BJ (cell line): ENCODE measurements at regions of chr2 and their contacts with region 1.

Region 1: GRCh38 chr2:26605195-26605998 is 35.8 kb downstream of the CIB4 start:
- DNase-seq: no peak
- H3K4me3 ChIP-seq: no peak overlapping the region
- H3K27me3 ChIP-seq: peaks cover 6% of the 10 kb centered on the region
- CTCF ChIP-seq: peak; percentile 85

Region 2: DNA sequence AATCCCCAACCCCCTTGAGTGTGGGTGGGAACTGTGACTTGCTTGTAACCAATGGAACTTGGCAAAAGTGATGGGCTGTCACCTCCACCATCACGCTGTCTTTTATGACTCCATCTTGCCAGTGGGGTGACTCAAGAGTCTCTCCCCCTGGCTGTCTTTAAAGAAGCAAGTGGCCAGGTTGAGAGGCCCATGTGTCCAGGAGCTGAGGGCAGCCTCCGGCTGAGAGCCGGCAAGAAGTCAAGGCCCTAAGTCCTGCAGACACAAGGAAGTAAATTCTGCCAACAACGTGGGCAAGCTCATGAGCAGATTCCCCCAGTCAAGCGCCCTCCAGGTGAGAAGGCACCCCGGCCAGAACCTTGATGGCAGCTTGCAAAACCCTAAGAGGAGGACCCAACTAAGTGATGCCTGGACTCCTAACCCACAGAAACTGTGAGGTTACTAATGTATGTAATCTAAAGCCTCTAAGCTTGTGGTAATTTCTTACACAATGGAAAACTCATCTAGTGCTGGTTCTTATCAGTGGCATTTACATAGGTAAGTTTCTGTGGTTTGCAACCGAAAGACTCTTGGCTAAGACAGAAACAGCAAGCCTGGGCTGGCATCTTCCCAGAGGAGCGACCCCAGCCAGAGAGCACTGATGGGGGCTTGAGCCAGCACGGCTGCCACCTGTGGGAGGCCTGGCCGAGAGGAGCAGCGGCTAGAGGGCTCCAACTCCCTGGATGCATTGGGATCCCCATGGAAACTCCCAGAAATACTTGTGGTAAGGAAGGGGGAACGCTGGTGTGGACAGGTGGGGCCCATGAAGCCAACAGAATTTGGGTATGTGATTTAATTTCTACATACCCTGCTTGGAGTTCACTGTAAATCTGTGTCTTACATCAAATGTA is 13.5 kb before region 1 on chr2:
- CTCF ChIA-PET with region 1: interaction called, 30 read pairs
- POLR2A ChIA-PET with region 1: no interaction called
- DNase-seq: no peak
- H3K4me3 ChIP-seq: no peak overlapping the region
- H3K27me3 ChIP-seq: peaks cover 29% of the 10 kb centered on the region
- CTCF ChIP-seq: no peak

Region 3: DNA sequence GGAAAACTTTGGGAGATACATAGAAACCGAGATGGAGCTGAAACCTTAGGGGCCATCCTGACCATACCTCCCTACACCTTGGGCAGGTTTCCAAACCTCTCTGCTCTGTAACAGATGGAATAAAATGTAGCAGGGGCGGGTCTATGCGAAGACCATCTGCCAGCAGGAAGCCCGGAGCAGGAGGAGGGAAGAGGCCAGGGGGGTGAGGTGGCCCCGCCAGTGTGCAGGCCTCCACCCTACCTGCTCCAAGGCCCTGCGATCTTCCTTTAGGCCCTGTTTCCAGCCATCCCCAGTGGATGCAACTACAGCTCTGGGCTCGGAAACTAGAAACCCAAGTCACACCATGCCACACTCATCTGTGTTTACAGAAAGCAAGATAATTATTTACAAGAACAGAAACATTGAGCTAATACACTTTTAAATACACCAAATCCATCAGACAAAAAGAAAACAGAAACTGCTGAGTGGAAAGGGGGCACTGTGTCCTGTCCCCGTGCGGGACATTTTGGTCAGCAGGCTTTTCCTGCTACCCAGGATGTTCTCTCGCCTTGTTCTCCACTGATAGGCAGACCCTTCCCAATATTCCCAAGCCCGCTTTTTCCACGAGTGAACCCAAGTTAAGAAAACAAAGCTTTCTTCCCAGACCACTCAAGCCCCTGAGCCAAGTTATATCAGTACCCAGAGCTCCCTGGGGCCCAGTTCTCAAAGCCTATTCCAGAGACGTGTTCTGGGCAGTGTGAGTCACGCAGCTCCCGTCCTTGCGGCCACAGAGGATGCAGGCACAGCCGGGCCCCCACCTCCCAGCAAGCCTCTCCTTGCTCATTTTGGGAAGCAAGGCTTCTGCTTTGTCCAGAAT is 18.4 kb after region 1 on chr2:
- CTCF ChIA-PET with region 1: interaction called, 19 read pairs
- POLR2A ChIA-PET with region 1: no interaction called
- DNase-seq: no peak
- H3K4me3 ChIP-seq: no peak overlapping the region
- H3K27me3 ChIP-seq: peaks cover 11% of the 10 kb centered on the region; the same call in 1 of the 2 replicates
- CTCF ChIP-seq: no peak

Region 4: GRCh38 chr2:26652361-26653041 is 47.1 kb after region 1 on chr2:
- CTCF ChIA-PET with region 1: interaction called, 11 read pairs
- POLR2A ChIA-PET with region 1: no interaction called
- DNase-seq: peak; percentile 66
- H3K4me3 ChIP-seq: no peak overlapping the region
- H3K27me3 ChIP-seq: peaks cover 23% of the 10 kb centered on the region
- CTCF ChIP-seq: no peak

Region 5: GRCh38 chr2:26754993-26755541 is 149.7 kb after region 1 on chr2:
- CTCF ChIA-PET with region 1: interaction called, 19 read pairs
- POLR2A ChIA-PET with region 1: no interaction called
- DNase-seq: no peak
- H3K4me3 ChIP-seq: no peak overlapping the region
- H3K27me3 ChIP-seq: no peaks in the 10 kb centered on the region
- CTCF ChIP-seq: no peak